ENCODE measurements at regions of chr6 and their contacts with region 1.

Region 1: GRCh38 chr6:26342106-26343004 is 22.6 kb upstream of the BTN3A2 start:
- DNase-seq: no peak
- H3K4me3 ChIP-seq: peak overlapping the region in 3 of 8 donors; percentile 2 to 57 (median 15)
- H3K27ac ChIP-seq: peak overlapping the region in 3 of 8 donors; percentile 1 to 41 (median 32)
- H3K4me1 ChIP-seq: peaks cover 0 to 12% (median 9%) of the 10 kb centered on the region in 6 donors
- H3K27me3 ChIP-seq: peaks cover 0 to 28% (median 0%) of the 10 kb centered on the region in 7 donors
- CTCF ChIP-seq: no peak
- POLR2A ChIP-seq: no peak

Region 2: GRCh38 chr6:26571592-26572296 is 229.4 kb after region 1 on chr6:
- intact Hi-C with region 1: loop called (anchors 10 kb)
- DNase-seq: peak; percentile 72
- H3K4me3 ChIP-seq: peak overlapping the region; percentile 1 to 67 (median 42)
- H3K27ac ChIP-seq: peak overlapping the region; percentile 10 to 77 (median 62)
- H3K4me1 ChIP-seq: peaks cover 0 to 48% (median 12%) of the 10 kb centered on the region in 6 donors
- H3K27me3 ChIP-seq: peaks cover 0 to 12% (median 0%) of the 10 kb centered on the region in 7 donors
- CTCF ChIP-seq: no peak
- POLR2A ChIP-seq: no peak

Region 3: DNA sequence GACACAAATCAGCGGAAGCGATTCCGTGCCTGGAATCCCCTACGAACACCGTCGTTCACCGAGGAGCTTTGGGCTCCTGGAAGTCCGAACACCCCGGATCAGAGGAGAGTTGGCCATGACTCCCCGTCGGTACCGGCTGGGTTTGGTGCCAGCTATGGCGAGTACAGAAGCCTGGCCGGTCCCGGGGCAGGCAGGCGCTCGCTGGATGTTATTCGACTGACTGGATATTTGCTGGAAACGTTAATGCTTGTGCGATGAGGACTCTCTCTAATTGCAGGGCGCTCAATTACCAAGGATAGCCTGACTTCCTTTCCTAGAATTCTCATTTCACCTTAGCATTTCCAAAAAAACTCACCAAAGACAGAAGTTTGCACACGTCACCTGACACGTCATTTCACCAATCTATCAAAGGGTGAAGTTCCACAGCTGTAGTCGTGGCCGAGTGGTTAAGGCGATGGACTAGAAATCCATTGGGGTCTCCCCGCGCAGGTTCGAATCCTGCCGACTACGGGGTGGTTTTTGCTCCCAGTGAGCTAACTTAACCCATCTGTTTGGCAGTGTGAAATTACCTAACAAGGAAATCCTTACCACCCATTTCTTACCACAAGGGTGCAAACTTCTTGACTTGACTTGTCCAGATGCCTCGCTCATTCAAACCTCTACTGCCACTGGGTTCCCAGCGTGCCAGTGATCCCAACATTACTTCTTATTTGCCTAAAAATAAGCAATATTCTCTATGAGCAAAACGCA is 1153.2 kb after region 1 on chr6:
- intact Hi-C with region 1: no loop called
- DNase-seq: no peak
- H3K4me3 ChIP-seq: peak overlapping the region; percentile 5 to 62 (median 36)
- H3K27ac ChIP-seq: peak overlapping the region in 4 of 8 donors; percentile 13 to 53 (median 25)
- H3K4me1 ChIP-seq: peaks cover 0 to 13% (median 3%) of the 10 kb centered on the region in 6 donors
- H3K27me3 ChIP-seq: peaks cover 0 to 76% (median 20%) of the 10 kb centered on the region in 7 donors
- CTCF ChIP-seq: no peak
- POLR2A ChIP-seq: no peak